ENCODE measurements at regions of chr14 and their contacts with region 1.

Region 1: GRCh38 chr14:104130974-104131651 is 7.3 kb upstream of the KIF26A start:
- DNase-seq: peak; percentile 40 to 54
- H3K4me3 ChIP-seq: no peak overlapping the region
- H3K4me3 Mint-ChIP-seq: no peak overlapping the region
- H3K27ac Mint-ChIP-seq: no peak overlapping the region
- H3K4me1 ChIP-seq: peaks cover 7% of the 10 kb centered on the region
- H3K4me1 Mint-ChIP-seq: no peaks in the 10 kb centered on the region
- H3K27me3 ChIP-seq: peaks cover 1% of the 10 kb centered on the region; the same call in 1 of the 2 replicates
- H3K27me3 Mint-ChIP-seq: peaks cover 18% of the 10 kb centered on the region
- CTCF ChIP-seq: peak; percentile 61 to 69

Region 2: GRCh38 chr14:104094709-104095438 is 36.2 kb before region 1 on chr14:
- CTCF ChIA-PET with region 1: interaction called, 3 read pairs
- POLR2A ChIA-PET with region 1: no interaction called
- intact Hi-C with region 1: loop called (anchors 1 kb)
- DNase-seq: peak; percentile 65 to 80
- H3K4me3 ChIP-seq: no peak overlapping the region
- H3K4me3 Mint-ChIP-seq: no peak overlapping the region
- H3K27ac Mint-ChIP-seq: no peak overlapping the region
- H3K4me1 ChIP-seq: no peaks in the 10 kb centered on the region
- H3K4me1 Mint-ChIP-seq: no peaks in the 10 kb centered on the region
- H3K27me3 ChIP-seq: no peaks in the 10 kb centered on the region
- H3K27me3 Mint-ChIP-seq: peaks cover 3% of the 10 kb centered on the region
- CTCF ChIP-seq: peak; percentile 88 to 90

Region 3: GRCh38 chr14:104353921-104354701 is 223.0 kb after region 1 on chr14:
- CTCF ChIA-PET with region 1: no interaction called
- POLR2A ChIA-PET with region 1: no interaction called
- intact Hi-C with region 1: no loop called
- DNase-seq: no peak
- H3K4me3 ChIP-seq: no peak overlapping the region
- H3K4me3 Mint-ChIP-seq: no peak overlapping the region
- H3K27ac Mint-ChIP-seq: no peak overlapping the region
- H3K4me1 ChIP-seq: no peaks in the 10 kb centered on the region
- H3K4me1 Mint-ChIP-seq: no peaks in the 10 kb centered on the region
- H3K27me3 ChIP-seq: no peaks in the 10 kb centered on the region
- H3K27me3 Mint-ChIP-seq: peaks cover 4% of the 10 kb centered on the region
- CTCF ChIP-seq: no peak